ENCODE measurements at regions of chr4 and their contacts with region 1.

Region 1: DNA sequence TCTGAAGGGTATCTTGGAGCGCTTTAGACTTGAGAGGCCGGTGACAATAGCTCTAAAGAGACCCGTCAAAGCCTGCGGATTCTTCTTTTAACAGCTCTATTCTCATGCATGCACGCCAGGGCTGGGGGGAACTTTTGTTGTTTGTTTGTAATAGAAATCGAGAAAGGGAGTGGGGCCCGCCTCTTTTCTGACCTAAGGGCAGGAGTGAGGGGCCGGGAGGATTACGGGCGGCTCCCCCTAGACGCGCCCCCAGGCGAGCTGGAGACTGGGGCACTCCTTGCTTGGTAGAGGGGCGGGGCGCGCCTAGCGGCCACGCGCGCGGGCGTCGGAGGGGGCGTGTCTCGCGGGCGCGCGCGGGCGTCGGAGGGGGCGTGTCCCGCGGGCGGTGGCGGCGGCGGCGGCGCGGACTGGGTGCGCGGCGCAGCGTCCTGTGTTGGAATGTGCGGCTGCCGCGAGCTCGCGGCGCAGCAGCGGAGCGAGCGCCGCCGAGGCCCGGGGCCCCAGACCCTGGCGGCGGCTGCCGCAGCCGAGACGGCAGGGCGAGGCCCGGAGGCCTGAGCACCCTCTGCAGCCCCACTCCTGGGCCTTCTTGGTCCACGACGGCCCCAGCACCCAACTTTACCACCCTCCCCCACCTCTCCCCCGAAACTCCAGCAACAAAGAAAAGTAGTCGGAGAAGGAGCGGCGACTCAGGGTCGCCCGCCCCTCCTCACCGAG is at the start of gene REST:
- DNase-seq: peak; percentile 78 to 84
- ATAC-seq: peak; percentile 79
- total RNA-seq, gene REST: 26.5 to 32.1 TPM

Region 2: GRCh38 chr4:56958111-56958517 is 50.5 kb after region 1 on chr4:
- intact Hi-C with region 1: no loop called
- DNase-seq: peak; percentile 68 to 76
- ATAC-seq: peak; percentile 69

Region 3: DNA sequence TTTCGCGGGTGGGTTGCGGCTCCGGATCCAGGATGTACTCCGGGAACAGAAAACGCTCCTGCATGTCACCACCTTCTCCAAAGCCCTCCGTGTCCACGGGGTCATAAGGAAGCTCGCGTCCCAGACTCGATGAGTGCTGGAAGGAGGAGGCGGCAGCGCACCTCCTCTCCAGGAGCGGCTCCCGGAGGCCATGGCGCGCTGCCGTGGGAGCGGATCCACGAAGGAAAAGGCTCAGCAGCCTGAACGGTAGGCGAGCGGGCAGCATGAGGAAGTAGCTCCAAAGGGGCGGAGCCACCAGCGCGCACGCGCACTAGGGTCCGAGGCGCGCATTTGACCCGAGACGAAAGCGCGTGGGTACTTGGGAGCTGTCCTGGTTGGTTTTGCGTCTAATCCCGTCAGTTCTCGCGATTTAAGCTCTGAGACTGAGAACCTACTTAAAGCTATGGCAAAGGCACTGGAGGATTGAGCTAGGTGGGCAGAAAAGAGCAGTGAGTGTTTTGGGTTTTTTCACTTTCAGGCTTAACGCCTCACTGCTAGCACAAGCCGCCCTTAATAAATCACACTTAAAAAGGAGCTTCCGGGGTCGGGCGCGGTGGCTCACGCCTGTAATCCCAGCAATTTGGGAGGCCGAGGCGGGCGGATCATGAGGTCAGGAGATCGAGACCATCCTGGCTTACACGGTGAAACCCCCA is 69.8 kb after region 1 on chr4 and contains the start of gene NOA1:
- intact Hi-C with region 1: loop called in 1 of 2 experiments (anchors 5 kb)
- DNase-seq: peak; percentile 97 to 98
- ATAC-seq: peak; percentile 80
- total RNA-seq, gene NOA1: 21.9 to 22.3 TPM